Endothelial cell of umbilical vein (primary cell): ENCODE measurements at regions of chr22 and their contacts with region 1.

Region 1: GRCh38 chr22:18077639-18078328 is at the start of gene PEX26:
- DNase-seq: peak; percentile 93
- H3K4me3 ChIP-seq: peak within 1 kb of the TSS; percentile 83 to 90 (median 86)
- H3K27ac ChIP-seq: peak within 1 kb of the TSS; percentile 56
- H3K4me1 ChIP-seq: peaks cover 21% of the 10 kb centered on the region
- H3K27me3 ChIP-seq: no peaks in the 10 kb centered on the region
- CTCF ChIP-seq: no peak
- POLR2A ChIP-seq: no peak
- total RNA-seq, gene PEX26: 40.9 and 44.4 TPM in 2 replicates

Region 2: GRCh38 chr22:17742527-17742902 is 335.3 kb before region 1 on chr22:
- CTCF ChIA-PET with region 1: interaction called, 122 read pairs
- POLR2A ChIA-PET with region 1: interaction called, 3 read pairs
- dilution Hi-C with region 1: no loop called
- intact Hi-C with region 1: loop called (anchors 1 kb)
- DNase-seq: peak; percentile 49
- H3K4me3 ChIP-seq: no peak overlapping the region
- H3K27ac ChIP-seq: no peak overlapping the region
- H3K4me1 ChIP-seq: no peaks in the 10 kb centered on the region
- H3K27me3 ChIP-seq: no peaks in the 10 kb centered on the region
- CTCF ChIP-seq: peak; percentile 66 to 88
- POLR2A ChIP-seq: no peak

Region 3: GRCh38 chr22:17830043-17830961 is 247.5 kb before region 1 on chr22:
- CTCF ChIA-PET with region 1: interaction called, 385 read pairs
- POLR2A ChIA-PET with region 1: interaction called, 5 read pairs
- dilution Hi-C with region 1: no loop called
- intact Hi-C with region 1: loop called (anchors 1 kb)
- DNase-seq: peak; percentile 82
- H3K4me3 ChIP-seq: no peak overlapping the region
- H3K27ac ChIP-seq: no peak overlapping the region
- H3K4me1 ChIP-seq: no peaks in the 10 kb centered on the region
- H3K27me3 ChIP-seq: no peaks in the 10 kb centered on the region
- CTCF ChIP-seq: peak; percentile 97
- POLR2A ChIP-seq: no peak

Region 4: DNA sequence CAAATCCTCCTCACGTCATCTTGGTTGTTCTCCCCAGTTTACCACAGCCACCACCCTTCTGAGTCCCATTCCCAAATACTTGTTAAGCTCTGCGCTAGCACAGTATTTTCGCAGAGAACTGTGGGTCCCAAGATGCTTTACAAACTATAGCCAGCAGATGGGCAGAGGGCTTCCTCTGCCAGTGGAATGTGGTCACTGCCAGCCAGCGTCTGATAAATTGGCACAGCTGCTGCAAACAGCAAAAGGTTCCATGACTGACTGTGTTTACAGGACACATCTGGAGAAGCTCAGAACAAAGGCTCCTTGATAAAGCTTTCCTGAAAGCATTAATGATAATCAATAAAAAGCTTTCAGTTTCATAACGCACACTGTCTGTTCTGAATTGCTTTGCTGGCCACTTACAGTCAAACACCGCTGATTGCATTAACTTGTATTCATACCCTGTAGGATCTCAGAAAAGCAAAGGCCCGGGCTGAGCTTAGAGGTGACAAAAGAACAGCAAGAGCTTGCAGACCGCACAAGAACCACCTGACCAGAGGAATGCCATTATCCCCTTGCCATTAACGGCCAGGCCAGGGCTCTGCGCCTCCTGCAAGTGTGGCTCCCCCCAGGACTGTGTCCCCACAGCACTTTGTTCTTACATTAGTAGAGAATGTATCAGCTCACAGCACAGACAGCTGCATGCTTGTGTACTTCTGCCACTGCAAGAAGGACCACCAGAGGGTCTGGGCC is 174.1 kb before region 1 on chr22:
- CTCF ChIA-PET with region 1: interaction called, 44 read pairs
- POLR2A ChIA-PET with region 1: no interaction called
- dilution Hi-C with region 1: no loop called
- intact Hi-C with region 1: no loop called
- DNase-seq: peak; percentile 65
- H3K4me3 ChIP-seq: no peak overlapping the region
- H3K27ac ChIP-seq: no peak overlapping the region
- H3K4me1 ChIP-seq: no peaks in the 10 kb centered on the region
- H3K27me3 ChIP-seq: no peaks in the 10 kb centered on the region
- CTCF ChIP-seq: no peak
- POLR2A ChIP-seq: no peak

Region 5: GRCh38 chr22:18012531-18012930 is 65.3 kb before region 1 on chr22:
- CTCF ChIA-PET with region 1: interaction called, 10 read pairs
- POLR2A ChIA-PET with region 1: no interaction called
- dilution Hi-C with region 1: no loop called
- intact Hi-C with region 1: no loop called
- DNase-seq: no peak
- H3K4me3 ChIP-seq: no peak overlapping the region
- H3K27ac ChIP-seq: no peak overlapping the region
- H3K4me1 ChIP-seq: no peaks in the 10 kb centered on the region
- H3K27me3 ChIP-seq: no peaks in the 10 kb centered on the region
- CTCF ChIP-seq: no peak
- POLR2A ChIP-seq: no peak

Region 6: DNA sequence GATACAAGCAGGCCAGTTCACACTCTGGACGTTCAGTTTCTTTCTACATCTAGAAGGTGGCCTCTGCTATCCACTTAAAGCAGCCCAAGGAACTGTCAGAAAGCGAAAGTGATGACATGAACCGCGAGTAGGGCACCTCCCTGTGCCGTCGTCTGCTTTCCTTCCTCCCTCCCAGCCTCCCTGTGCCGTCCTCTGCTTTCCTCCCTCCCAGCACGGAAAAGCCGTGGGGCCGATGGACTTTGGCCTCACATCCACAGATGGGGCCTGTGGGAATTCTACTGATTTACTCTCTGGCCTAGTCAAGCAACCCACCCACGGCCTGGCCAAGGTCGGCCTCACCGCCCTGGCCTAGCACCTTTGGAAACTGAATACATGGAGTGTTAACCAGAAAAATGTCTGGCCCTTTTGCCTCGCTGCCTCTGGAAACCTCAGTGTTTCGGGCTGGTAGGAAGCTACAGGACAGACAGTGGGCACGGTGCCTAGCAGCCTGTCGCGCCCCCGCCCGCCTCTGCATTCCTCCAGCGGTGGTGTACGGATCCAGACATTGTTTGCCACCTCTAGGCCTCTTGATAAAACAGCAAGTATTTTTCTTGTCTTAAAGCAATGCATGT is 14.2 kb after region 1 on chr22:
- CTCF ChIA-PET with region 1: interaction called, 41 read pairs
- POLR2A ChIA-PET with region 1: no interaction called
- dilution Hi-C with region 1: no loop called
- intact Hi-C with region 1: no loop called
- DNase-seq: peak; percentile 89
- H3K4me3 ChIP-seq: peak overlapping the region; percentile 9 to 44 (median 21)
- H3K27ac ChIP-seq: peak overlapping the region; percentile 92
- H3K4me1 ChIP-seq: peaks cover 14% of the 10 kb centered on the region
- H3K27me3 ChIP-seq: no peaks in the 10 kb centered on the region
- CTCF ChIP-seq: peak; percentile 15 to 17
- POLR2A ChIP-seq: peak; percentile 37